SK-N-SH (cell line): ENCODE measurements at regions of chr2 and their contacts with region 1.

Region 1: DNA sequence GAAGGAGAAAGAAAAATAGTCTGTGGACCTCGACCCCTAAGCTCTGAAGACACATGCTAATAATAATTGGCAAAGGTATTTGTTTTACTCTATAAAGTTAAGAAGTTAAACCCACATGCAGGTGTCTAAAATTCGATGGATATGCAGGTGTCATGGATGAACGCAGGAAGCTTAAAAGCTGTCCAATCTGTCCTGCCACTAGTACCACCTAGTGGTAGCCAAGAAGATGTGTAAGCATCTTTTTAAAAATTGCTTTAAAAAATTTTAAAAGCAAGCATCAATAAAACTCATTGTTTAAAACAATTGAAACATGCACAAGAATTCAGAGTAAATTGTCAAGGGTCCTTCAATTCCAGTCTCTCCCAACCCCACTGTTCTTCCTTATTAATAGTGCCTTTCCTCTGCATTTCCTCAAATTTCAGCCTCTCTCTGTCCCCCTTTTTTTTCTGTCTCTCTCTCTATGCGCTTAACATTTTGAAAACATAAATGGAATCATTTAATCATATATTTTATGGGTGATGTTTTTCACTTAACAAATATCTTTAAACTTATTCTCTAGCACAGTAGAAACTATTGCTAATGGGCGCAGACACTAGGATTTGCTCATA is 30.6 kb upstream of the PPP3R1 start:
- DNase-seq: peak; percentile 69
- H3K4me3 ChIP-seq: no peak overlapping the region
- H3K27ac ChIP-seq: no peak overlapping the region
- H3K4me1 ChIP-seq: peaks cover 0 to 4% of the 10 kb centered on the region in 2 experiments; a peak in 2 of 4 replicates
- H3K27me3 ChIP-seq: no peaks in the 10 kb centered on the region
- CTCF ChIP-seq: peak; percentile 89
- EP300 ChIP-seq: no peak
- RAD21 ChIP-seq: peak; percentile 83

Region 2: DNA sequence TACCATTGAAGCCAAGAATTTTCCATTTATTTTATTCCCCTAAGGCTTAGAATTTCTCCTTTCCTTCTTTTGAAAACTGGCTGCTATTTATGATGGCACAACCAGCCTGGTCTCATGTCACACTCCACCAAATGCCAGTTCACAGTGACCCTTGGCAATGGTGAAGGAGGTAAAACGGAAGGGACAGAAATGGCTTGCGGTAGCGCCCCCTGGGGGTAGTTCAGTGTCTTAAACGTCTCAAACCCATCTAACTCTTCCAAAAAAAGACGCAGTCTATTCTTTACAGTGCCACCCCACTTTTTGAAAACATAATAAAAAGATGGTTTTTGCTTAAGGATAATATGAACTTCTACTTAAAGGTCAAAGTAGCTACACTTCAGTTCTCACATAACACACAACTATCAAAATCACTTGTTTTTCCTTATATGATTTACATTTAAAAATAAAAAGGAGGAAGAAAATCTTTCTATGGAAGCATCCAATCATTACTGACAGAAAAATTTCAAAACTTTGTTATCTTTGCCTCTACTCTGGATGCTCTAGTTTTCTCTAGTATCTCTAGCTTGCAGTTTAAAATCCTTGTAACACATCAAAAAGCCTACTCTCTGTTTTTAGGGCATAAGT is 97.3 kb before region 1 on chr2:
- CTCF ChIA-PET with region 1: interaction called, 10 read pairs
- POLR2A ChIA-PET with region 1: no interaction called
- DNase-seq: peak; percentile 44
- H3K4me3 ChIP-seq: peak overlapping the region in 1 of 2 experiments; percentile 17; a peak in 1 of 4 replicates
- H3K27ac ChIP-seq: no peak overlapping the region
- H3K4me1 ChIP-seq: no peaks in the 10 kb centered on the region; a peak in 1 of 4 replicates
- H3K27me3 ChIP-seq: no peaks in the 10 kb centered on the region
- CTCF ChIP-seq: peak; percentile 75
- EP300 ChIP-seq: no peak
- RAD21 ChIP-seq: peak; percentile 36; the same call in 1 of the 2 replicates

Region 3: DNA sequence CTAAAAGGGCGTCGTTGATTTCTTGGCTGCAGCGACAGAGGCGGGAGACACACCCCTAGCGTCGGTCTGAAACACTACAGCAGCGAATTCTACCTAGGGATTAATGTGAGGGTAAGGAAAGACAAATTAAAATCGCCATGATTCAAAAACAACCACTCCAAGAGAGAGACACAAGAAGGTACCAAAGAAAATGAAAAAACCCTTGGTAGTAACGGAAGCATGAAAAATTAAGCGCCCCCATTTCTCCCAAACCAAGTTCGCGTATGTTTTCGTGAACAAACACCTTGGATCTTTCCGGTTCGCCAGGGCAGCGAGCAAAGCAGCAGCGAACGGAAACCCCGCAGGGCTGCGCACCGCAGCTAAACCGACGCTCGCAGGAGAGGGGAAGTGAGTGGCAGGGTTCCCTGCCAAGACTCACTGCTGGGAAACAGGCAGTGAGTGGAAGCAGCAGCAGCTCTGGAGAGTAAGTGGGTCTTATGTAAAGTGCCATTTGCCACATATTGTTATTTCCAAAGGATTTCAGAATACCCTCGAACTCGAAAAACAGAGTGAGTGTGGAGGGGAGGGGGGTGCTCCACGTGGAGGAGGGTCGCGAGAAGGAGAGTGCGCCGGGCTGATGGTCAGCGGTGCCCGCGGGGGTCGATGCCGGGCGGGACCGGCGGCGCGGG is 31.6 kb before region 1 on chr2:
- CTCF ChIA-PET with region 1: interaction called, 11 read pairs
- POLR2A ChIA-PET with region 1: no interaction called
- DNase-seq: peak; percentile 65
- H3K4me3 ChIP-seq: peak overlapping the region; percentile 88 to 99
- H3K27ac ChIP-seq: peak overlapping the region; percentile 90 to 96
- H3K4me1 ChIP-seq: peaks cover 18 to 40% of the 10 kb centered on the region in 2 experiments
- H3K27me3 ChIP-seq: no peaks in the 10 kb centered on the region
- CTCF ChIP-seq: peak; percentile 71
- EP300 ChIP-seq: no peak
- RAD21 ChIP-seq: peak; percentile 71

Region 4: GRCh38 chr2:68295516-68295915 is 12.6 kb after region 1 on chr2:
- CTCF ChIA-PET with region 1: interaction called, 51 read pairs
- POLR2A ChIA-PET with region 1: no interaction called
- DNase-seq: no peak
- H3K4me3 ChIP-seq: no peak overlapping the region
- H3K27ac ChIP-seq: no peak overlapping the region
- H3K4me1 ChIP-seq: no peaks in the 10 kb centered on the region; a peak in 1 of 4 replicates
- H3K27me3 ChIP-seq: no peaks in the 10 kb centered on the region
- CTCF ChIP-seq: no peak
- EP300 ChIP-seq: no peak
- RAD21 ChIP-seq: no peak